GM12878 (cell line): ENCODE measurements at regions of chr5 and their contacts with region 1.

Region 1: DNA sequence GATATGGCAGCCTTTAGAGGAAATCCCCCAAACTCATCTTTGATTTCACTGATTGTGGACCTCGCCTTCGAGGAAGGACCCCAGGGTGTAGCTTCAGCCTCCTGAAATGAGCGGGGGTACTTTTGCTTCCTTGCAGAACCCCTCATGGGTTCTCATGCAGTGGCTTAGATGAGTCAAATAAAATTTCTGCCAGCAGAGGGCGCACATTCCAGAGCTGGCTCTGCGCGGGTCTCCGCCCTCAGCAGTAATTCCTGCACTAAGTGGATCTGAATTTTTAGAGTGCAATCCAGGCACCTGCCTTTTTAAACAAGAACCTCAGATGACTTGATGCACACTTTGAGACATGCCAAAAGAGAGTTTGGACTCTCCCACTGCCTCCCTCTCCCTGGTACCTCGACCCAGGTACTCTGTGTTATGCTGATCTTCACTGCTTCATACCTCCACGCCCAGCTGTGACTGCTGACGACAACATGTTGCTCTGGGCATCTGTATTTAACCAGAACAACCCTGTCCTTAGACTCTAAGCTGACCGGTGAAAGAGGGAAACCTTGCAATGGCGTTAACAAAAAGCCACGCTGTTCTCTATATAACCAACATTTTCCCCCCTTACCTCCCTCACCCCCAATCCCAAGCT is 7.3 kb downstream of the EGFLAM start:
- DNase-seq: no peak
- ATAC-seq: peak; percentile 95
- H3K4me3 ChIP-seq: no peak overlapping the region
- H3K27ac ChIP-seq: no peak overlapping the region
- H3K4me1 ChIP-seq: no peaks in the 10 kb centered on the region
- H3K27me3 ChIP-seq: no peaks in the 10 kb centered on the region
- CTCF ChIP-seq: peak; percentile 56 to 77 (median 69)
- EP300 ChIP-seq: no peak
- POLR2A ChIP-seq: no peak
- RAD21 ChIP-seq: peak; percentile 30; the same call in 1 of the 2 replicates

Region 2: GRCh38 chr5:38134810-38135209 is 130.9 kb before region 1 on chr5:
- CTCF ChIA-PET with region 1: no interaction called
- POLR2A ChIA-PET with region 1: no interaction called
- RAD21 ChIA-PET with region 1: no interaction called
- SMC1A ChIA-PET with region 1: no interaction called
- in situ Hi-C with region 1: no loop called
- intact Hi-C with region 1: no loop called
- DNase-seq: no peak
- ATAC-seq: no peak
- H3K4me3 ChIP-seq: no peak overlapping the region
- H3K27ac ChIP-seq: no peak overlapping the region
- H3K4me1 ChIP-seq: no peaks in the 10 kb centered on the region
- H3K27me3 ChIP-seq: no peaks in the 10 kb centered on the region
- CTCF ChIP-seq: no peak
- EP300 ChIP-seq: no peak
- POLR2A ChIP-seq: no peak
- RAD21 ChIP-seq: no peak

Region 3: DNA sequence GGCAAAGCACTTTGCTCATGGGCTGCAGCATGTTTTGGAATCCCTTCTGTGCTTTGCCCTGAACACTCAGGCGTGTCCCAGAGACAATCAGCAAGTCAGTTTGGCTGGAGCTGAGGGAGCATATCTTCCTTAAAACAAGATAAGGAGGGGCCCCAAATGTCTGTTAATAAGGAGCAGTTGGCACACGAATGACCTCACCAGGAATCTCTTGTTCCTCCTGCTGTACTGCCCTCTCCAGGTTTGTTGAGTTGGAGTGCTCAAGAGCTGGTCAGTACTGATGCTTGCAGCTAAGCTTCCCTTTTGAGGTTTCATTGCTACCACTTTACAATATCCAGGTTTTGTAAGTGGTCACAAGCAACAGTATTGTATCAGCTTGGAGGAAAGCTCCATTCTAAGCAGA is 108.6 kb before region 1 on chr5:
- CTCF ChIA-PET with region 1: no interaction called
- POLR2A ChIA-PET with region 1: no interaction called
- RAD21 ChIA-PET with region 1: no interaction called
- SMC1A ChIA-PET with region 1: no interaction called
- in situ Hi-C with region 1: no loop called
- intact Hi-C with region 1: no loop called
- DNase-seq: no peak
- ATAC-seq: no peak
- H3K4me3 ChIP-seq: no peak overlapping the region
- H3K27ac ChIP-seq: no peak overlapping the region
- H3K4me1 ChIP-seq: no peaks in the 10 kb centered on the region
- H3K27me3 ChIP-seq: no peaks in the 10 kb centered on the region; a peak in 1 of 4 replicates
- CTCF ChIP-seq: no peak
- EP300 ChIP-seq: no peak
- POLR2A ChIP-seq: no peak
- RAD21 ChIP-seq: no peak

Region 4: DNA sequence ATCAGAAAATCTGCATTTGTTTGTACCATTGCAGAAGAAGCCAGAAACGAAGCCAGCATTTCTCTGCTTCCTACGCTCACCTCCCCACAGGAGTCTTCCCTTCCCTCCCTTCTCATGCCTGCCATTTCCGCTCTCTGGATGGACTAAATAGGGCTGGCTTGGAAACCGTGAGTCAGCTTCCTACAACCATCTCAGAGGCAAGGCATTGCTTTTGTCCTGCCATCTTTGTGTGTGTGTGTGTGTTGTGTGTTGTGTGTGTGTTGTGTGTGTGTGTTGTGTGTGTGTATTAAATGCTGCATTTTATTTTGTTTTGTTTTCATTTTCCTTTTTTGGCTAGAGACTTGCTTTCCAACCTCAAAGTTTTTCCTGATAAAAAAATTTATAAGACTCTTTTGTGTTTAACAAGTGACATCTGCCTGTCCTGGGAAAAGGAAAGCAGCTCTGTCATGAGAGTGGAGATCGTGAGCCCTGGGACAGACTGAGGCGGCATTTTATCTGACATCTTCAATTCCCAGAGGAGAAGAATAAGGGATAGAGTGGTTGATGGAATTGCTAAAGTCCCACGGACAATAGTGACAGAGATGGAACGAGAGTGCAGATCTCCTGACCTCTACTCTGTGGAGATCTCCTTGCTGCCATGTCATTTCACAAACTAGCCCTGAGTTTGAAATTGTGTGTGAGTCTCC is 14.8 kb before region 1 on chr5:
- CTCF ChIA-PET with region 1: interaction called, 14 read pairs
- POLR2A ChIA-PET with region 1: no interaction called
- RAD21 ChIA-PET with region 1: no interaction called
- SMC1A ChIA-PET with region 1: interaction called, 3 read pairs
- in situ Hi-C with region 1: no loop called
- intact Hi-C with region 1: no loop called
- DNase-seq: no peak
- ATAC-seq: no peak
- H3K4me3 ChIP-seq: no peak overlapping the region
- H3K27ac ChIP-seq: no peak overlapping the region
- H3K4me1 ChIP-seq: no peaks in the 10 kb centered on the region
- H3K27me3 ChIP-seq: no peaks in the 10 kb centered on the region
- CTCF ChIP-seq: no peak
- EP300 ChIP-seq: no peak
- POLR2A ChIP-seq: no peak
- RAD21 ChIP-seq: no peak

Region 5: DNA sequence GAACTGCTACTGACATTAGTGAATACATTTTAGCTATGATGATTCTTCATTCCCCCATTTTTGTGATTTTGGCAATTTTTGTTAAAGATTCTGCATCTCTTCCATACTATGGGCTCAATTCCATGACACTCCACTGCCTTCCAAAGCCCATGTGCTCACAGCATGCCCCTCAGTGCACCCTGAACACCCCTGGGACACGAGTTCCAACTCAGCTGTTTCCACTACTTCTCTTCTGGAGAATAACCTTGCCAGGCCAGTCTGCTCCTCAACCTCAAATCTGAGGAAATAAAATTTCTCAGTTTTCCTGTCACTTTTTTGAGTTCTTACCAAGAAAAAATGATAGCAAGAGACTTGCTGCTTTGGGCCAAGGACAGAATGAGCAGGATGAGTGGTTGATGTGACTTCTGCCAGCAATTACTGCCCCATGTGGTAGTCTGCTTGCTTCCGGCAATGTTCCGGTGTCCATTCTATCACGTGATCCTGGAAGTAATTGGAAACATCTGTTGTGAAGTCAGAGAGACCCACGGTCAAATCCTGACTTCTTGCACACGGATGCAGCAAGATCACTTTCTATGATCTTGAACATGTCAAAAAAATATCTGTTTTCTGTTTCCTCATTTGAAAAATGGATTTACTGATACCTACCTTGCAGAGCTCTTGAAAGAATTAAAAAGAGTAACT is 51.0 kb after region 1 on chr5:
- CTCF ChIA-PET with region 1: no interaction called
- POLR2A ChIA-PET with region 1: no interaction called
- RAD21 ChIA-PET with region 1: no interaction called
- SMC1A ChIA-PET with region 1: no interaction called
- in situ Hi-C with region 1: no loop called
- intact Hi-C with region 1: no loop called
- DNase-seq: no peak
- ATAC-seq: no peak
- H3K4me3 ChIP-seq: no peak overlapping the region
- H3K27ac ChIP-seq: no peak overlapping the region
- H3K4me1 ChIP-seq: no peaks in the 10 kb centered on the region
- H3K27me3 ChIP-seq: no peaks in the 10 kb centered on the region
- CTCF ChIP-seq: no peak
- EP300 ChIP-seq: no peak
- POLR2A ChIP-seq: no peak
- RAD21 ChIP-seq: no peak

Region 6: GRCh38 chr5:38948501-38948900 is 682.8 kb after region 1 on chr5:
- CTCF ChIA-PET with region 1: no interaction called
- POLR2A ChIA-PET with region 1: no interaction called
- RAD21 ChIA-PET with region 1: no interaction called
- SMC1A ChIA-PET with region 1: no interaction called
- in situ Hi-C with region 1: no loop called
- intact Hi-C with region 1: no loop called
- DNase-seq: no peak
- ATAC-seq: no peak
- H3K4me3 ChIP-seq: no peak overlapping the region
- H3K27ac ChIP-seq: no peak overlapping the region
- H3K4me1 ChIP-seq: no peaks in the 10 kb centered on the region
- H3K27me3 ChIP-seq: no peaks in the 10 kb centered on the region
- CTCF ChIP-seq: no peak
- EP300 ChIP-seq: no peak
- POLR2A ChIP-seq: no peak
- RAD21 ChIP-seq: no peak